Tibial artery (tissue), 4 donors: ENCODE measurements at regions of chrX and their contacts with region 1.

Region 1: DNA sequence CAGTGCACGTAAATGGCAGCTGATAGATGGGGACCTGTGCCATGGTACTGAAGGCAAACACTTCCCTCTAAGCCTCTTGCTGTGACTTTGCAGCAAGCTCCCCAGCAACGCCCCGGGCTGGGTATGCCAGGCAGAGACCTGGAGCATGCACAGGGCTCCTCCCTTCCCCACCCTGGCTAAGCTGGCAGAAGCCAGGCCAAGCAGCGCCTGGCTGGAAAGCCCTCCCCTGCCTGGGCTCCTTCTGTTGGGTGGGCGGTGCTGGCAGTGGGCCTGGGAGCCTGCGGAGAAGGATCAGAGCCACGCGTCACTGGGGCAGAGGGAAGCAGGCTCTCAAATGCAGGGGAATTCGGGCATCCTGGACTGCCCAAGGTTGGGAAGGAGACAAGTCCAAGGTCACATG is 3.6 kb downstream of the ATP2B3 start:
- DNase-seq: no peak
- H3K4me3 ChIP-seq: no peak overlapping the region
- H3K27ac ChIP-seq: no peak overlapping the region
- H3K4me1 ChIP-seq: peaks cover 0 to 18% (median 9%) of the 10 kb centered on the region in 4 donors
- H3K27me3 ChIP-seq: peaks cover 0 to 70% of the 10 kb centered on the region in 2 donors
- CTCF ChIP-seq: no peak

Region 2: DNA sequence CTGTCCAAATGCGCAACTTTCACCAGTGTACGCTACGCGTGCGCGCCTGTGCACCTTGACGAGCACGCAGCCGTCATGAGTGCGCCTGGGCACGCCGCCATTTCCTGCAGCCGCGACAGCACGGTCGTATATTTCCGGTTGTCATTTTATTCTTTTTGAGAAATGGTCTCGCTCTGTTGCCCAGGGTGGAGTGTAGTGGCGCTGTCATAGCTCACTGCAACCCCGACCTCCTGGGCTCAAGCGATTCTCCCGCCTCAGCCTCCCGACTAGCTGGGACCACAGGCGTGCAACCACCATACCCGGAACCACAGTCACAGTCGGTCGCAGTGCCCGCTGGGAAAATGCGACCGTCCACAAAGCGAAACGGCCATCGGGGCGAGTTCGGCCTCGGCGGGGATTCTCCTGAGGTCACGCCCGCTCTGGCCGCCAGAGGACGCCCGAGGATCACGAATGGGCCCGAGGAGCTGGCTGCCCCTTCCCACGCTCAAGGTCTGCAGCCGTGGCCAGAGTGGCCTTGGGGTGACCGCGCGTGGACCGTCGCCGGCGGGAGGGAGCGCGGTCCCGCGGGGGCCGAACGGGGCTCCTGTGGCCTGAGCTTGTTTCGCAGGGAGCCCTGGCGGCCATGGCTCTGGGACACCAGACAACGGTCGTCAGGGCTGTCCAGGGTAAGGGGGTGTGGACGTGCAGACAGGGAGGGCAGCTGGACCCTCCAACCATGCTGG is 488.5 kb before region 1 on chrX:
- intact Hi-C with region 1: loop called (anchors 10 kb)
- DNase-seq: peak; percentile 46 to 78
- H3K4me3 ChIP-seq: peak overlapping the region; percentile 37 to 47
- H3K27ac ChIP-seq: no peak overlapping the region
- H3K4me1 ChIP-seq: no peaks in the 10 kb centered on the region
- H3K27me3 ChIP-seq: no peaks in the 10 kb centered on the region
- CTCF ChIP-seq: peak; percentile 83 to 88

Region 3: GRCh38 chrX:153703036-153703370 is 182.0 kb after region 1 on chrX:
- intact Hi-C with region 1: no loop called
- DNase-seq: no peak
- H3K4me3 ChIP-seq: no peak overlapping the region
- H3K27ac ChIP-seq: no peak overlapping the region
- H3K4me1 ChIP-seq: peaks cover 0 to 34% (median 5%) of the 10 kb centered on the region in 4 donors
- H3K27me3 ChIP-seq: no peaks in the 10 kb centered on the region
- CTCF ChIP-seq: no peak